ENCODE measurements at regions of chr19 and their contacts with region 1.

Region 1: GRCh38 chr19:41570639-41571112 is 5.3 kb upstream of the CEACAM21 start:
- DNase-seq: peak; percentile 76 to 88 (median 80)
- ATAC-seq: peak; percentile 100
- H3K4me3 ChIP-seq: no peak overlapping the region
- H3K27ac ChIP-seq: no peak overlapping the region
- H3K4me1 ChIP-seq: no peaks in the 10 kb centered on the region
- H3K27me3 ChIP-seq: peaks cover 0 to 11% of the 10 kb centered on the region in 2 experiments; a peak in 1 of 5 replicates
- CTCF ChIP-seq: peak; percentile 90 to 92 (median 92)
- EP300 ChIP-seq: no peak
- POLR2A ChIP-seq: no peak
- RAD21 ChIP-seq: peak; percentile 75 to 86

Region 2: GRCh38 chr19:41310033-41310758 is 260.5 kb before region 1 on chr19 and contains the start of gene CCDC97:
- CTCF ChIA-PET with region 1: no interaction called
- POLR2A ChIA-PET with region 1: no interaction called
- in situ Hi-C with region 1: loop called (anchors 25 kb)
- intact Hi-C with region 1: no loop called
- DNase-seq: peak; percentile 92 to 95 (median 94)
- ATAC-seq: peak; percentile 80
- H3K4me3 ChIP-seq: peak within 1 kb of the TSS; percentile 67
- H3K27ac ChIP-seq: peak within 1 kb of the TSS; percentile 88
- H3K4me1 ChIP-seq: peaks cover 11 to 12% of the 10 kb centered on the region in 2 experiments; a peak in 4 of 5 replicates
- H3K27me3 ChIP-seq: no peaks in the 10 kb centered on the region
- CTCF ChIP-seq: no peak
- EP300 ChIP-seq: peak; percentile 55
- POLR2A ChIP-seq: peak; percentile 92
- RAD21 ChIP-seq: no peak
- polyA plus RNA-seq, gene CCDC97: 0.60 to 0.79 TPM

Region 3: DNA sequence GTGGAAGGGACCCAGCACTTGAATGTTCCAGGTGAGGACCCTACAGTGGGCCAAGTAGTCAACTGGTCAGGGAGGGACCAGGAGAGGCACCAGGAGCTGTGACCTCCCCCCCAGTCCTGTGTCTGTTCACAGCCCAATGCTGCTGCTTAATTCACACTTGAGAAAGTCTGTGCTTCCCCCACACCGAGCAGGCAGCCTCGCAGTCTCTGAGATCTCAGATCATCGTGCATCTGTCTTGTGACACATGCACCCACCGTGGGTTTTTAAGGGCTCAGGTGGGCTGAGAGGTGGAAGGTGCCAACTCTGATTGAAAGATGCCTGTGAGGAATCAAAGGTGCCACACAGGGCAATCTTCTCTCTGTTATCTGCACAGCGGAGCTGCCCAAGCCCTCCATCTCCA is 143.9 kb after region 1 on chr19:
- CTCF ChIA-PET with region 1: no interaction called
- POLR2A ChIA-PET with region 1: no interaction called
- in situ Hi-C with region 1: no loop called
- intact Hi-C with region 1: no loop called
- DNase-seq: no peak
- ATAC-seq: no peak
- H3K4me3 ChIP-seq: no peak overlapping the region
- H3K27ac ChIP-seq: no peak overlapping the region
- H3K4me1 ChIP-seq: no peaks in the 10 kb centered on the region
- H3K27me3 ChIP-seq: peaks cover 3 to 16% of the 10 kb centered on the region in 2 experiments; a peak in 3 of 5 replicates
- CTCF ChIP-seq: no peak
- EP300 ChIP-seq: no peak
- POLR2A ChIP-seq: no peak
- RAD21 ChIP-seq: no peak